Activated T-helper 1 cell treated with anti-CD3 and anti-CD28 coated beads, Interleukin-12 subunit alpha, Interleukin-12 subunit beta, Interleukin-2, Interleukin-4 antibody, amounts not matched to agents 30 ng/mL and 10 ng/mL and 1 ng/mL, durations not matched to agents 14 hours and 24 hours and 36 hours (primary cell): ENCODE measurements at regions of chr1 and their contacts with region 1.

Region 1: DNA sequence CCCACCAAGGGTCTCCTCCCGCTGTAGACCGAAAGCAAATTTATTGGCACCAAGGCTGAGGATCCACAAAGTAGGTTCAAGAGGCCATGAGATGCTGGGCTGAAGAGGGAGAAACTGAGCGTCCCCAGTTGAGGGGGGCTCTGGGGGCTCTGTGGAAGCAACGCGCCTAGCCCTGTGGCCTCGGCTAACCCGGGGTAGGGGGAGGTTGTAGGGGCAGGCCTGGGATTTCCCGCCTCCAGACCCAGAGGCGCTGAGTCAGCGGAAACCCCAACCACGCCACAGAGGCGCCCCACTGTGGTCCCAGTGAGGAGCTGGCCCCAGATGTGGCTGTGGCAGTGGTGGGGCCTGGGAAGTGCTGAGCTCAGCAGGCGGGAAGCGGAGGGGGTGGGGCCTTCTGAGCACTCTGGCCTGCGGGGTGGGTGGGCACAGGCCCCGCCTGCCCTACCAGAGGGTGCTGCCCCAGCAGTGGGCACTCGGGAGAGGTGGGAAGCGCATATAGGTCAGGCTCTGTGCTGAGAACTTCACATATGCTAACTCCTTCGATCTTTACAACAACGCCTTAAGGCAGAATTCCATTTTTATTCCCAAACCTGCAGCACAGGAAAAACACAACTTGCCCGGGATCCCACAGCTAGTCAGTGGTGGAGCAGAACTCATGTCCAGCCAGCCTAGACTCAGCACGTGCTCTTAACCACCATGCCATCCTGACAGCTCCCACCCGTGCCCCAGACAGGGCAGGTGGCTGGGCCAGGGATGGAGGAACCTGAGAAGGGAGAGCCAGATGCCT is 1.5 kb upstream of the COL16A1 start:
- DNase-seq: peak; percentile 76
- H3K4me3 Mint-ChIP-seq: peak overlapping the region; percentile 66
- H3K27ac Mint-ChIP-seq: peak overlapping the region; percentile 64
- H3K4me1 Mint-ChIP-seq: peaks cover 54% of the 10 kb centered on the region
- H3K27me3 Mint-ChIP-seq: peaks cover 37% of the 10 kb centered on the region

Region 2: DNA sequence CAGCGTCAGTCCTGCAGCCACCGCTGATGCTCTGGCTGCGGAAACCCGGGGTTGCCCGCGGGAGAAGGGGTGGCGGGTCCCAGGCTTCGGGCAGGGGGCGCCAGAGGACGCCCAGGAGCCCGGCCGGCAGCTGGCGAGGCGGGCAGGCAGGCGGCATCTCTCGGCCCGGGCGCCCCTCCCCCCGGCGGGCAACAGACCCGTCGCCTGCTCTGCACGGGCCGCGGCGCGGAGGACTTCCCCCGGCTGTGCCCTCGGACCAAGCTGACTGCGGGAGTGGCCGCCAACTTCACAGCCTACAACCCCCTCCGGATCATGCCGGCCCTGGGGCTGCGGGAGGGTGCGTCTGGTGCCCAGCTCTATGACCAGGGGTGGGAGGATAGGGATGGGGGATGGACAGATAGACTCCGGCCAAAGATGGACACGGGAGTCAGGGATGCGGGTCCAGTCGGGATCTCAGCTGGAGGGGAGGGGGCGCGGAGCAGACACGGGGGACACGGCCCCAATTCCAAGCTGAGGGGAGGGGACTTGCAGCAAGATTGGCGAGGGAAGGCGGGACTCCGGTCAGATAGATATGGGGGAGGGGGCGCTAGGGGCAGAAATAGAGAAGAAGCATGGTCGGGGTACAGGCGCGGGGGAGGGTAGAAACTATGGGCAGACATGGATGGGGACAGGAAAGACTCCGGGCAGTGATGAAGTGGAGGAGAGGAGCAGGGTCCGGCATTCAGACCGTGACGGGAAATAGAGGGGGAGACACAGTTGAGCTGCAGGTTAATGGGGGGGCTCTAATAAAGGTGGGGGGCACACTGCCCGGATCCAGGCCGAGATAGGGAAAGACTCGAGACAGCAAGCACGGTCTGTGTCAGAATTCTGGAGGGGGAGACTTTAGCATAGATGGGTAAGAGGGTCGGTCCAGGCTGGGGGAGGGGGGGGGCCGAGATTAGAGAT is 57.7 kb after region 1 on chr1:
- intact Hi-C with region 1: loop called (anchors 5 kb)
- DNase-seq: peak; percentile 42
- H3K4me3 Mint-ChIP-seq: peak overlapping the region; percentile 65
- H3K27ac Mint-ChIP-seq: no peak overlapping the region
- H3K4me1 Mint-ChIP-seq: peaks cover 25% of the 10 kb centered on the region
- H3K27me3 Mint-ChIP-seq: peaks cover 60% of the 10 kb centered on the region

Region 3: GRCh38 chr1:31995263-31995662 is 290.0 kb after region 1 on chr1:
- intact Hi-C with region 1: no loop called
- DNase-seq: no peak
- H3K4me3 Mint-ChIP-seq: no peak overlapping the region
- H3K27ac Mint-ChIP-seq: no peak overlapping the region
- H3K4me1 Mint-ChIP-seq: peaks cover 21% of the 10 kb centered on the region
- H3K27me3 Mint-ChIP-seq: no peaks in the 10 kb centered on the region